ENCODE measurements at regions of chr16 and their contacts with region 1.

Region 1: DNA sequence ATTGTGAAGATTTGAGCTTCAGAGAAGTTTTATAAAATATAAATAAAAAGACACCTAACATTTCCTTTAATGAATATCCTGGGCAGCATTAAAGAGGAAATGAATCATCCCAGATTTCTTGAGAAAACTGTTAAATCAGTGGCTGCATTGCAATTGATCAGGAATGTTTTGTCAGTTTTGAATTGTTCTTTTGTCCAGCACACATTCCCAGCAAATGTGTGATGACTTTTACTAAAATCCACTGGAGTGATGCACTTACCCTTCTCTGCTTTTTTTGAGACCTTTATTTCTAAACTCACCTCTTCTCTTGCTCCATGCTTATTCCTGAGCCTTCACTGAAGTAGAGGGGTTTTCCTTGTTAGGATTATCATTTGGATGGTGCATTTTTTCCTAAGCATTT is 1307.2 kb downstream of the CDH8 start:
- DNase-seq: no peak
- H3K4me3 Mint-ChIP-seq: no peak overlapping the region
- H3K27ac Mint-ChIP-seq: no peak overlapping the region
- H3K4me1 Mint-ChIP-seq: no peaks in the 10 kb centered on the region
- H3K27me3 Mint-ChIP-seq: no peaks in the 10 kb centered on the region
- CTCF ChIP-seq: no peak

Region 2: GRCh38 chr16:60363566-60363965 is 365.5 kb before region 1 on chr16:
- CTCF ChIA-PET with region 1: no interaction called
- POLR2A ChIA-PET with region 1: no interaction called
- intact Hi-C with region 1: loop called (anchors 10 kb)
- DNase-seq: no peak
- H3K4me3 Mint-ChIP-seq: no peak overlapping the region
- H3K27ac Mint-ChIP-seq: no peak overlapping the region
- H3K4me1 Mint-ChIP-seq: no peaks in the 10 kb centered on the region
- H3K27me3 Mint-ChIP-seq: no peaks in the 10 kb centered on the region
- CTCF ChIP-seq: no peak

Measured in MCF 10A (cell line).